ENCODE measurements at regions of chr12 and their contacts with region 1.

Region 1: DNA sequence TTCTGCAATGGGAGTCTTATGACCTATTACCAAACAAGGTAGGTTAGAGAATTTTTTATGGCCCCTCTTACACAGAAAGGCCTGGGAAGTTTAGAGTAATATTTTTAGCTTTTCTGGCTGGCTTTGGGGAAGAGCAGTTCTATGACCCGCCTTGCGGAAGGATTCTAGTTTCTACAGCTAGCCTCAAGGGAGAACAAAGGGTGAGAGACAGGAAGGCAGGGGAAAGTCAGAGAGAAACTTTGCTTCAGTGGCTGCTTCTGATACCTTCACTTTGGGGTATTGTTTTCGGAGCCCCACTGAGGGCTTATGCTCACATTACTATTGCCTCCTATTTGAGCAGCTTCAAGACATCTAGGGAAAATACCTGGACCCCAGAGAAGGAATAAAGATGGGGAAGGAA is 80.7 kb upstream of the NUDT4 start:
- DNase-seq: no peak
- ATAC-seq: peak in 1 of 4 donors; percentile 29
- H3K4me3 ChIP-seq: no peak overlapping the region
- H3K27ac ChIP-seq: peak overlapping the region in 9 of 12 donors; percentile 8 to 82 (median 43)
- H3K4me1 ChIP-seq: peaks cover 0 to 40% (median 13%) of the 10 kb centered on the region in 12 donors
- H3K27me3 ChIP-seq: no peaks in the 10 kb centered on the region
- CTCF ChIP-seq: no peak
- POLR2A ChIP-seq: no peak

Region 2: GRCh38 chr12:93137656-93138612 is 159.1 kb before region 1 on chr12:
- intact Hi-C with region 1: loop called in 1 of 10 experiments (anchors 10 kb)
- DNase-seq: no peak
- ATAC-seq: peak; percentile 39 to 79 (median 51)
- H3K4me3 ChIP-seq: no peak overlapping the region
- H3K27ac ChIP-seq: peak overlapping the region in 8 of 12 donors; percentile 23 to 61 (median 32)
- H3K4me1 ChIP-seq: peaks cover 0 to 40% (median 10%) of the 10 kb centered on the region in 12 donors
- H3K27me3 ChIP-seq: no peaks in the 10 kb centered on the region
- CTCF ChIP-seq: no peak
- POLR2A ChIP-seq: no peak

Region 3: DNA sequence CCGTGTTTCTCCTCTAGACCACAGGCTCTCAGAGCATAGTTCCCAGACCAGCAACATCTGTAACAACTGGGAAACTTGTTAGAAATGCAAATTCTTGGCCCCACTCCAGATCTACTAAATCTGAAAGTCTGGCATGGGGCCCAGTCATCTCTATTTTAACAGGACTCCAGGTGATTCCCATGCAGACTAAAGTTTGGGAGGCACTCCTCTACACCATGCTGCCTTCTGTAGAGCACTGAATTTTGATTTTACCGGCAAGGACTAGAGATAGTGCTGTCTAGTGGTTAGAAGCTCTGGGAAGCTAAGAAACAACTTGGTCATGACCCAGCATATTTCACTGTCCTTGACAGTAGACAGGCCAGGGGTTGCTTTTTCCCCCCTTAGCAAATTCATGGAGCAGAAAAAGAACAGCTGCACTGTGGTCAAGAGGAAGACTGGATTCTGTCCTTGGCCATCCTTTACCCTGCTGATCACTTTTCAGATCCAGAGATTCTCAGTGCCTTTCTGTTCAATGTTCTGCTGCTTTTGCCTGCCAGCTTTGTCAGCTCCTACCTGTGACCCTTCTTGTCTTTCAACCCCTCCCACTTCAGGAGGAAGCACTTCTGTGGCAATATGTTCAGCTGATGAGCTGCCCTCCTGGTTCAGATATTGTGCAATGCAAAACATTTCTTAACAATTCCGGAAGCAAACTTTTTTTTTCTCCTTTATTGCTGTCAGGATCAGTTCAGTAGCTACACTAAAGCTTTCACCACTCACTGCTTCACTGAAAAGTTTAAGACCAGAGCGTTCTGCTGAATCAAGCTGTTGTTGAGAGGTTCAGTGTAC is 53.1 kb before region 1 on chr12:
- intact Hi-C with region 1: loop called in 1 of 10 experiments (anchors 5 kb)
- DNase-seq: no peak
- ATAC-seq: peak; percentile 5 to 63 (median 55)
- H3K4me3 ChIP-seq: no peak overlapping the region
- H3K27ac ChIP-seq: peak overlapping the region in 5 of 12 donors; percentile 2 to 83 (median 28)
- H3K4me1 ChIP-seq: peaks cover 0 to 40% (median 22%) of the 10 kb centered on the region in 12 donors
- H3K27me3 ChIP-seq: no peaks in the 10 kb centered on the region
- CTCF ChIP-seq: no peak
- POLR2A ChIP-seq: no peak

Measured in heart left ventricle (tissue), 16 donors.